ENCODE measurements at regions of chr2 and their contacts with region 1.

Region 1: DNA sequence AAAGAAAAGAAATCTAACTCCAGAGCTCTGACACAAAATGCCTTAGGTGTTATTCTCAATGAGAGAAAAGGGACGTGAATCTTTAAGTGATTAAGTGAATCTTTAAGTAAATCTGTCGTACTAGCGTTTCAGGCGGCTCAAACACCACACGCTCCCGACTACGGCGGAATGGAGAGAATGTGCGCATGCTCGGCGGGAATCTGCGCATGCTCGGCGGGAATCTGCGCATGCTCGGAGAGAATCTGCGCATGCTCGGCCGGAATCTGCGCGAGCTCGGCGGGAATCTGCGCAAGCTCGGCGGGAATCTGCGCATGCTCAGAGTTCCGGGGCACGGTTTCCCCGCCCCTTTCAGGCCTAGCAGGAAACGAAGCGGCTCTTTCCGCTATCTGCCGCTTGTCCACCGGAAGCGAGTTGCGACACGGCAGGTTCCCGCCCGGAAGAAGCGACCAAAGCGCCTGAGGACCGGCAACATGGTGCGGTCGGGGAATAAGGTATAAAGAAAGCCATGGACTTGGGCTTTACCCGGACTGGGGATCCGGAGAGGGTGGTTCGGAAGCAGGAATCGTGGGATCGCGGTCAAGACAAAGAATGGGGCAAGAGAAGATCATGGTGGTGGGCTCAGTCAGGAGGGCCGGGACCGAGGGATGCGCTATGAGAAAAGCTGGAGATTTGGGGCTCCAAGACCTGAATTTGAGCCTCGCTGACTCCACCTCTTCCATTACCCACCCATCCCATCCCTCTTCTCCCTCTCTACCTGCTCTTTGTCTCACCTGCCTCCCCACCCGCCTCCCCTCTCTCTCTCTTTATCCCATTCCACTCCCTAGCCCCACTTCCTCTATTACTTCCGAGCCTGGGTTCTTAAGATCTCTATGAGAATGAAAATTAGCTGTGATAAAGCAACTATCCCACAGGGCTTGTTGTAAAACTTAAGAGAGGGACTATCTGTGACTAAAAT is at the start of gene XRCC5:
- DNase-seq: peak; percentile 98
- ATAC-seq: peak; percentile 80
- H3K4me3 Mint-ChIP-seq: peak within 1 kb of the TSS; percentile 99
- H3K27ac Mint-ChIP-seq: peak within 1 kb of the TSS; percentile 99
- H3K4me1 Mint-ChIP-seq: peaks cover 54% of the 10 kb centered on the region
- H3K27me3 Mint-ChIP-seq: no peaks in the 10 kb centered on the region
- total RNA-seq, gene XRCC5: 362 to 394 TPM

Region 2: DNA sequence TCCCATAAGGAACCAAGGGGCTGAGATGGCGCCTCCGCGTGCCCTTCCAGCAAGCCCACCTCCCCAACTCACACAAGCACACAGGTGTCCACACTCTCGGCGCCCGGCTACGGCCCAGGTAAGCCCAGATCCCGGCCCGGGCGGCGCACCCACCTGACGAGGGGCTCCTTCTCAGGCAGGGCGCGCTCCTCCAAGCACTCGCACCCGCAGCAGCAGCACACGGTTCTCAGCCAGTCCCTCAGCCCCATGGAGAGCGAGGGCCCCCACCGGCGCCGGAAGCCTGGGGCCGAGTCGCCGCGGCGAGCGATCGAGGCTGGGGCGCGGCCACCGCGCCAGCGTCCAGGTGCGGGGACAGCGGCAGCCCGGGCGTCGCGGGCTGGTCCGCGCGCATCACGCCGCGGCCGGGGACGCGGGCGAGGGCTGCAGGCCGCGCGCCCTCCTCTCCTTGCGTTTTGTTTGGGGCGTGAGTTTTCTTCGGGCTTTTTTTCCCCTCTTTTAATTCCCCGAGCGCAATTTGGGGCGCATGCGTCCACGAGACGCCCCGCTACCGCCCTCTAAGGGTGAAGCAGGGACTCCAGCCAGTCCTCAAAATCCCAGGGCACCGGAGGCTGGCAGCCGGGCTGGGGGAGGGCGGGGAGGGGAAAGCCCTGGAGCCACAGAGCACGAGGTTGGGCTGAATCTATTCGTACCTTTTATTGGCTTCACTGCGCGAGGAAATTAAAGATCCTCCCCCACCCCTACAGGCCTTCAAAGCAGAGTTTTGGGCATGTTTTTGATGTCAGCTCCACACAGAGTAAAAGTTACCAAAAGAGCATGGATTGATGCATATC is 95.9 kb before region 1 on chr2 and contains the start of gene MREG:
- CTCF ChIA-PET with region 1: interaction called, 16 read pairs
- POLR2A ChIA-PET with region 1: interaction called, 5 read pairs
- DNase-seq: peak; percentile 88
- ATAC-seq: peak; percentile 77
- H3K4me3 Mint-ChIP-seq: peak within 1 kb of the TSS; percentile 91
- H3K27ac Mint-ChIP-seq: peak within 1 kb of the TSS; percentile 81
- H3K4me1 Mint-ChIP-seq: peaks cover 50% of the 10 kb centered on the region
- H3K27me3 Mint-ChIP-seq: no peaks in the 10 kb centered on the region
- total RNA-seq, gene MREG: 10.9 to 12.1 TPM

Region 3: DNA sequence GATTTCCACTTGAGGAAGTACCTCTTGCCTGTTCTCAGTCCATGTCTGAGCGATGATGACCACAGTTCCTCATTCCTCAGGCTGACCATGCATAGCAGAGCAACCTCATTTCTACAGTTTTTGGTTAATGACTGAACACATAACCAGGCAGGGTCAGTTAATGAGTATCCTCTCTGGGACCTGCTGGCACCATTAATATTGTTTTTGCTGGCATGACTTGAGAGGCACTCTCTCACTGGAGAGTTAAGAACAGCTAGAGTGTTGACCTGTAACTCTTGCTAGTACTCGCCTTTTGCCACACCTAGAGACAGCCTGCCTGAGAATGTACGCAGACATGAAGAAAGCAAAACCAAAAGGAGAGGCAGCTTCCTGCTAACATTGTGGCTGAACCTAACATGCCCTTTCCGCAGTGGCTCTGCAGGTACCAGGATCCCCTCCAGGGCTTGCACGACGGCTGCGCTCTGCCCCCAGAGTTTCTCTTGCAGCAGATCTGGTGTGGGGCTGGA is 51.5 kb before region 1 on chr2:
- CTCF ChIA-PET with region 1: interaction called, 38 read pairs
- POLR2A ChIA-PET with region 1: interaction called, 12 read pairs
- DNase-seq: peak; percentile 82
- ATAC-seq: peak; percentile 98
- H3K4me3 Mint-ChIP-seq: peak overlapping the region; percentile 78
- H3K27ac Mint-ChIP-seq: peak overlapping the region; percentile 97
- H3K4me1 Mint-ChIP-seq: peaks cover 32% of the 10 kb centered on the region
- H3K27me3 Mint-ChIP-seq: no peaks in the 10 kb centered on the region

Region 4: DNA sequence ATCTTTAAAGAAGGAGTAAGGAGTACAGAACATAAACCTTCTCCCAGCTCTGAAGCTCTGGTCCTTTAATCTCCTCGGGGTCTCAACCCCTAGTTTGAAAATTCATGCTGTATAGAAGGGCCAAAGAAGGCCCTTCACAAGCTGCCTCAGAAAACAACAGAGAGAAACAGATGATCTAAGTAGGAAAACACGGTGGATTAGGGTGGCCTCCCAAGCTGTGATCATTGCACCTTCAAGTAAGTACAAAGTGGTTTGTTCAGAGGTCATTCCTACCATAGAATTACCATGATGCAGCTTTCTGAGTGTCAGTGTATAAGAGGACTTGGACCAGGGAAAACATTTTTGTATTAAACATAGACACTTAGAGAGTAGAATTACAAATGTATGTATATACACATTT is 16.6 kb before region 1 on chr2:
- CTCF ChIA-PET with region 1: interaction called, 10 read pairs
- POLR2A ChIA-PET with region 1: interaction called, 12 read pairs
- DNase-seq: no peak
- ATAC-seq: no peak
- H3K4me3 Mint-ChIP-seq: no peak overlapping the region
- H3K27ac Mint-ChIP-seq: no peak overlapping the region
- H3K4me1 Mint-ChIP-seq: peaks cover 16% of the 10 kb centered on the region
- H3K27me3 Mint-ChIP-seq: no peaks in the 10 kb centered on the region

Region 5: DNA sequence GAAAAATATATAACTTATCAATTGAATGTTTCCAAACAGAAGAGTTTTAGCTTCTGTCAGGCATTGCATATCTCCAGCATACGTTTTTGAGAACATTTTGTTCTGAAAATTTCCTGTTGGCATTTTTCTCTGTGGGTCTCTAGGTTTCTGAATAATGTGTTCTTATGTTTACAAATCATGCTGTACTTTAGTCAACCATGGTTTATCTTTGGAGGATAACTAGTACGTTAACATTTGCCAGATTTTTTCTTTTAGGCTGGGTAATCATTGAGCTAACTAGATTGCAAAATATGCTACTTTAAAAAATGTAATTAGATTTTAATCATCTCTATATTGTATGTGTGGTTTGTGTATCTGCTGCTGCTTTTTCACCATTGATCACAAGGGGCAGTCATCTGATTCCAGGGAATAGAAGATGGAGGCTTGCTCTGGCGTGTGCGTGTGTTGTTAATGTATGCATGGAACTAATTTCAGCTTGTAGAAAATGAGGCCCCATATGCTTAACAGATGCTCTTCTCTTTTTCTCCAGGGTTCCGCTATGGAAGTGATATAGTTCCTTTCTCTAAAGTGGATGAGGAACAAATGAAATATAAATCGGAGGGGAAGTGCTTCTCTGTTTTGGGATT is 21.2 kb after region 1 on chr2:
- CTCF ChIA-PET with region 1: interaction called, 12 read pairs
- POLR2A ChIA-PET with region 1: no interaction called
- DNase-seq: no peak
- ATAC-seq: no peak
- H3K4me3 Mint-ChIP-seq: no peak overlapping the region
- H3K27ac Mint-ChIP-seq: peak overlapping the region; percentile 39
- H3K4me1 Mint-ChIP-seq: peaks cover 27% of the 10 kb centered on the region
- H3K27me3 Mint-ChIP-seq: no peaks in the 10 kb centered on the region

Measured in activated CD8-positive, alpha-beta T cell treated with anti-CD3 and anti-CD28 coated beads, Interleukin-2, amount 10 ng/mL, durations not matched to agents 7 days and 5 days (primary cell).